ENCODE measurements at regions of chrX and their contacts with region 1.

Region 1: GRCh38 chrX:3119376-3119775 is 78.1 kb downstream of the ARSF start:
- DNase-seq: no peak
- H3K4me3 ChIP-seq: no peak overlapping the region
- H3K27ac ChIP-seq: no peak overlapping the region
- H3K4me1 ChIP-seq: no peaks in the 10 kb centered on the region
- H3K27me3 ChIP-seq: no peaks in the 10 kb centered on the region
- CTCF ChIP-seq: no peak
- POLR2A ChIP-seq: no peak

Region 2: DNA sequence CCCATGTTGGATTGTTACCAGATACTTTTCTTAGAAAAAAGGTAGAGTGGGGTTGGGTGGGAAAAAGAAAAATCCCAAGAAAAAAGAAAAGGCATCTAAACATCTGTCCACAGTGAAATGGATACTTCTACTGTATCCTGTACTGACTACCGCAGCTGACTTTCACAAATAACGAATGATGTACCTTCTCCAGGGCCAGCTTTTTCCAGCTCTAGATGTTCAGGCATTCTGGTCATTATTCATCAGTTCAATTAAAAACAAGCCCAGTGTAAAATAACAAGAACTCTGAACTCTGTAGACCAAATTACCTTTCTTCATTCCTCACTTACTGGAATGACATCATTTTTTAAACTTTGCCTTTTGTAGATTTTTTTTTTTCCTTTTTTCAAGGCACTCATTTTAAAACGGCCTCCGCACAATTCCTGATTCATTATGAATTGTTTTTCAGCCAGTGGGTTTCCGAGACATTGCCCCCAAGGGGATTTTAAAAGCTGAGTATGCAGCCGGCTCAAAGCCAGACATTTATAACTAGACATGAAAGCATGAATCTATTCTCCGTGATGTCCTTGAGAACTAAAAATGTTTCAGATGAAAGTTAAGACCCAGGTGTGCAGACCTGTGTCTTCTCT is 480.5 kb after region 1 on chrX:
- intact Hi-C with region 1: no loop called
- DNase-seq: no peak
- H3K4me3 ChIP-seq: no peak overlapping the region
- H3K27ac ChIP-seq: no peak overlapping the region
- H3K4me1 ChIP-seq: no peaks in the 10 kb centered on the region
- H3K27me3 ChIP-seq: no peaks in the 10 kb centered on the region
- CTCF ChIP-seq: no peak
- POLR2A ChIP-seq: no peak

Region 3: GRCh38 chrX:3638280-3638873 is 519.0 kb after region 1 on chrX:
- intact Hi-C with region 1: loop called (anchors 10 kb)
- DNase-seq: peak in 1 of 2 donors; percentile 19
- H3K4me3 ChIP-seq: no peak overlapping the region
- H3K27ac ChIP-seq: no peak overlapping the region
- H3K4me1 ChIP-seq: no peaks in the 10 kb centered on the region
- H3K27me3 ChIP-seq: no peaks in the 10 kb centered on the region
- CTCF ChIP-seq: peak; percentile 22 to 46 (median 30)
- POLR2A ChIP-seq: no peak

Measured in uterus (tissue), 4 donors.